A549 (cell line): ENCODE measurements at regions of chrX and their contacts with region 1.

Region 1: GRCh38 chrX:53081925-53082772 is at the start of gene TSPYL2:
- DNase-seq: peak; percentile 95 to 96
- ATAC-seq: peak; percentile 88 to 96
- H3K4me3 ChIP-seq: peak within 1 kb of the TSS; percentile 71
- H3K27ac ChIP-seq: peak within 1 kb of the TSS; percentile 83 to 96
- H3K4me1 ChIP-seq: peaks cover 15% of the 10 kb centered on the region
- CTCF ChIP-seq: no peak
- EP300 ChIP-seq: no peak
- POLR2A ChIP-seq: peak; percentile 99
- RAD21 ChIP-seq: no peak
- polyA plus RNA-seq, gene TSPYL2: 25.2 and 27.2 TPM in 2 replicates

Region 2: DNA sequence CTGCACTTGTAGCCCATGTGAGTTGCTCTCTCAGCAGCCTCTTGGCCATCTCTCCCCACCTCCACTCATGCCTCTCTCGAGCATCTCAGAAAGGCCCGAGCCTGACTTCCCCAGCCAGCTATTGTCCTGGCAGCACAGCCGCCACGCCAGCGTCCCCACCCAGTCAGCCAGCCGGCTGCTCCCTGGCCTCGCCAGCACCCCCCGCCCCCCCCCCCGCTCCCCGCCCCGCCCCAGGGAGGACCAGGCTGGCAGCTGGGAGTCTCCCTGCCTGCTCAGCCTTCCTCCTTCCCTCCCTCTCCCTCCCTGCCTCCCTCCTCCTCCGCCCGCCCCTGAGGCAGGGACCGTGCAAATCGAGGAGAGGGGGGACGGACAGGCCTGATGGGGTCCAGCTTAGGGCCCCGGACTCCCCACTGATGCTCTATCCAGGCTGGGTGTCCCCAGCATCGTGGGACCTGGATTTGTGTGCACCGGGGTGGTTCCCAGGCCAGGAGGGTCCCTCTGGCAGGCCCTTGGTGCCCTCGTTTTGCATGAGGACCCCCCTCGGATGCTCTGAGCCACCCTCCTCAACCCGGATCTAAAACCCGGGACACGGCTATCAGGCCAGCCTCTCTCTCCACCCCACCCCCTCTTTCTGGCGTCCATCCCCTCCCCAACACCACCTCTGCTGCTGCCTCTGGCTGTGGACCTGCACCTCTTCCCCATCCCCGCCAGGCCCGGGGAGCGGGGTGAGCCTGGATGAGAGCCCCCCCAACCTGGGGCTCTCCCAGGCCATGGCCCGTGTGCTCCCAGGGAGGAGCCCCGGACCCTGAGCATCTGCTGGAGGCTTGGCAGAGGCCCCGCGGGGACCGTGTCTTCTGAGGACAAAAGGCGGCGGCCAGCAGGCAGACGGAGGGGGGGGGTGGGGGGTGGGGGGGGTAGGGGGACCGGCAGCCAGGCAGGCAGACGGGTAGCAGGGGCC is 33.7 kb before region 1 on chrX and contains the start of gene GPR173:
- CTCF ChIA-PET with region 1: no interaction called
- POLR2A ChIA-PET with region 1: no interaction called
- DNase-seq: no peak
- ATAC-seq: no peak
- H3K4me3 ChIP-seq: no peak within 1 kb of the TSS
- H3K27ac ChIP-seq: no peak within 1 kb of the TSS
- H3K4me1 ChIP-seq: no peaks in the 10 kb centered on the region
- CTCF ChIP-seq: no peak
- EP300 ChIP-seq: no peak
- POLR2A ChIP-seq: no peak
- RAD21 ChIP-seq: no peak
- polyA plus RNA-seq, gene GPR173: 0.03 TPM in 1 of 2 replicates, not detected in the other

Region 3: DNA sequence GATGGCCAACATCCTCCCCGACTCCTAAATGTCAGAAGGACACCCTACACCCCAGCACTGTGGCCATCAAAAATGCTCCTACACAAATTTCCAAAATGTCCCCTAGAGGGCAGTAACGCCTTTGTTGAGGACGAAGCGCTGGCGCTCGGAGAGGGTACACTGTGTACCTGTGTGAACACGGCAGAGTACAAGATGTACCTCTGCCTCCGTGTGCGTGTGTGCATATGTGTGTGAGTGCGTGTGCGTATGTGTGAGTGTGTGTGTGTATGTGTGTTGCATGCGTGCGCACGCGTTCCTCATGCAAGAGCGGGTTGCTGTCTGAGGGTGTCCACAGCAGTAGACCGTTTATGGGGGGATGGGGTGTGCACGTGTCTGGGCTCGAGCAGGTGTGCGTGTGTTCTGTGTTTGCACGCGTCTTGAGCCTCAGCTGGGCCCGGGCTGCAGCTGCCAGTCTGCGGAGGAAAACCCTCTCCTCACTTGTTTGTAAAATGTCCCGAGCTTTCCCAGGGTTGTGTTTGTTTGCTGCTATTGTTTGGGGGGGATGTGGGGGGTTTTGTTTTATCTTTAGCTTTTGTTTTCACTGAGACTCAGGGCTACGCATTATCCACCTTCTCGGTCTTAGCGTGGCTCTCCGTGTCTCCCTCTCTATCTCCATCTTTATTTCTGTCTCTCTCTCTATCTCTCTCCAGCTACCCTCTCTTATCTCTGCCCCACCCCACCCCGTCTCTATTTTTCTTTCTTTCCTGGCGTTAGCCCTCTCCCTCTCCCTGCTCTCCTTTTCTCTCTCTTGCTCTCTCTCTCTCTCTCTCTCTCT is 10.3 kb before region 1 on chrX:
- CTCF ChIA-PET with region 1: interaction called, 5 read pairs
- POLR2A ChIA-PET with region 1: interaction called, 30 read pairs
- DNase-seq: peak; percentile 56 to 76
- ATAC-seq: peak; percentile 78 to 90
- H3K4me3 ChIP-seq: peak overlapping the region; percentile 55
- H3K27ac ChIP-seq: peak overlapping the region; percentile 65 to 74; a peak in 5 of 6 replicates
- H3K4me1 ChIP-seq: peaks cover 15% of the 10 kb centered on the region; the same call in 2 of the 3 replicates
- CTCF ChIP-seq: peak; percentile 78
- EP300 ChIP-seq: no peak
- POLR2A ChIP-seq: no peak
- RAD21 ChIP-seq: peak; percentile 78 to 80

Region 4: GRCh38 chrX:53093748-53094583 is 11.8 kb after region 1 on chrX and contains the start of gene KANTR:
- CTCF ChIA-PET with region 1: interaction called, 6 read pairs
- POLR2A ChIA-PET with region 1: interaction called, 11 read pairs
- DNase-seq: peak; percentile 95 to 96
- ATAC-seq: peak; percentile 91 to 95
- H3K4me3 ChIP-seq: peak within 1 kb of the TSS; percentile 81
- H3K27ac ChIP-seq: peak within 1 kb of the TSS; percentile 81 to 89
- H3K4me1 ChIP-seq: peaks cover 6% of the 10 kb centered on the region; the same call in 2 of the 3 replicates
- CTCF ChIP-seq: no peak
- EP300 ChIP-seq: no peak
- POLR2A ChIP-seq: peak; percentile 28
- RAD21 ChIP-seq: no peak
- polyA plus RNA-seq, gene KANTR: 5.3 and 5.7 TPM in 2 replicates

Region 5: DNA sequence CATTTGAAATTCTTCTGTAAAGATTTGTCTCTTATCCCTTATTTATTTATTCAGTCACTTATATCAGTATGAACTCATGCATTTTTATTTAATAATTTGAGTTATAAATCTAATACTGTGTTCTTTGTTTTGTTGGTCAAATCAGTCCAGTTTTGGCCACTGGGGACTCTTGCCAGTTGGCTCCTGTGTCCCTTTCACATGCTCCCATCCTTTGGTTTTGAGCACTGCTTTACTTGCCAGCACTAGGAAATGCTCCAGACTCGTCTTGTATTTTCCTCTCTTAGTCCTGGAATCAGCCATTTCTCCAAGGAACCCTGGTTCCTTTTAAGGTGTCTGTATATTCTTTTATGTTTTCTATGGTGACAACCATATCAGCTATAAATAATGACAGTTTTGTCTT is 39.9 kb after region 1 on chrX:
- CTCF ChIA-PET with region 1: no interaction called
- POLR2A ChIA-PET with region 1: no interaction called
- DNase-seq: no peak
- ATAC-seq: no peak
- H3K4me3 ChIP-seq: no peak overlapping the region
- H3K27ac ChIP-seq: no peak overlapping the region
- H3K4me1 ChIP-seq: no peaks in the 10 kb centered on the region
- CTCF ChIP-seq: no peak
- EP300 ChIP-seq: no peak
- POLR2A ChIP-seq: no peak
- RAD21 ChIP-seq: no peak